Activated CD4-positive, alpha-beta memory T cell treated with anti-CD3 and anti-CD28 coated beads, Interleukin-2, amount 10 ng/mL, durations not matched to agents 7 days and 5 days (primary cell): ENCODE measurements at regions of chr14 and their contacts with region 1.

Region 1: GRCh38 chr14:65847075-65847847 is 434.7 kb downstream of the FUT8 start:
- DNase-seq: peak; percentile 88
- H3K4me3 Mint-ChIP-seq: peak overlapping the region; percentile 55
- H3K27ac Mint-ChIP-seq: peak overlapping the region; percentile 97
- H3K4me1 Mint-ChIP-seq: peaks cover 76% of the 10 kb centered on the region
- H3K27me3 Mint-ChIP-seq: no peaks in the 10 kb centered on the region

Region 2: DNA sequence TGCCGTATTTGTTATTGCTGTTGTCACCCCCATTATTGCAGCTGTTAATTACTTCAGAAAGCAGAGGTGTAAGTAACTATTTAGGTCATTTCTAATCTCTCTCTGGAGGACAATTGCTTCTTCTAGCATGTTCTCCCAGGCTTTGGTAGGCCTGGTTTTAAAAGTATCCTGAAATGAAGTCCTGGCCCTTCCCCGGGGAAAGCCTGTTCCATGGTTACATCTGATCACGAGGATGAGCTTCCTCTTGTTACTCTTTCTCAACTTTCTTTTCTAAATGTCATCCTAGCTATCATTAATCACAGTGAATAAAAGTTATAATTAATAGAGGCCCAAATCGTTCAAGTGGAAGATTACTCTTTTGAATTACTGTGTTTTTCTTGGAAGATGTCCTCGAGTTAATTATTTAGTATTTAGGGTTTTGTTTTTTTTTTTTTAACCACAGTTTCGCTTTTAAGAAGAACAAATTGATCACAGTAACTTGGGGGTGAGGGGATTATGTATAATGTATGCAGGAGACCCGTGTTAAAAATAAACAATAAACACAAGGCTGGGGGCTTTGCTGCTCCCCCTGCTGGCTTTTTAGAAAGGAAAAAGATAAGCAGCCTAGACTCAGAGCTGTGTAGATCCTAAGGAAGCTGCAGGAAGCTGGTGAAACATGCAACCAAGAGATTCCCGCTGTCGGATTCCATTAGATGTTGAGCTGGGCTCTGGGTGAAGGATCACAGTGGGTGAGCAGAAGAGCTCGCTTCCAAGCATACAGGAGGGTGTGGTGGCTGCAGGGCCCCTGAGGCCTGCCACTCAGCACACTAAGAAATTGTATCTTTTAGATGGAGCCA is 14.6 kb before region 1 on chr14:
- CTCF ChIA-PET with region 1: interaction called, 4 read pairs
- POLR2A ChIA-PET with region 1: interaction called, 10 read pairs
- DNase-seq: no peak
- H3K4me3 Mint-ChIP-seq: no peak overlapping the region
- H3K27ac Mint-ChIP-seq: no peak overlapping the region
- H3K4me1 Mint-ChIP-seq: peaks cover 31% of the 10 kb centered on the region
- H3K27me3 Mint-ChIP-seq: peaks cover 2% of the 10 kb centered on the region

Region 3: DNA sequence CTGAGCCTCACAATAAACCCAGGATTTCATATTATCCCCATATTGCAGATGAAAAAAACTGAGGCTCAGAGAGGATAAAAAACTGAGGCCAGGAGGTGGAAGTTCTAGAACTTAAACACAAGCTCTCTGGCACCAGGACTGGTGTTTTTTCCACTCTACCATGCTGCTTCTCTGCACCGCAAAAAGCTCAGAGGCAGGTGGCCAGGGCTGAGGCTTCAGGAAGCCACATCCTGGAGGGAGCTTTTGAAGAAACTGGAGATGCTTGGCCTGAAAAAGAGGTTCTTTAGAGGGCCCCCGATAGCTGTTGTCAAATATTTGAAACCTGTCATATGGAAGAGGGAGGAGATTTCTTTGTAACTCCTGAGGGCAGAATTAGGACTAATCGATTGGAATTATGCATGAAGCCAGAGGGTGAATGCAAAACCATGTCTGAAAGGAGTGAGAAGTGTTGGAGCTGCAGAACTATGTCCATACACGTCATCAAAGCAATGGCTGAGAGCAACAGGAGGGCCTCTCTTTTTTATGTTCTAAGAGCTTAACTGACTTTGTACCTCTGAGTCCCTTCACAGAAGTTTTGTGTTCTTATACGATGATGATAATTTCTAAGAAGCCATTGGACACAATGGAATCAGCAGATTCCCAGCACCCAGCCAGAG is 13.8 kb after region 1 on chr14:
- CTCF ChIA-PET with region 1: interaction called, 10 read pairs
- POLR2A ChIA-PET with region 1: interaction called, 31 read pairs
- DNase-seq: peak; percentile 72
- H3K4me3 Mint-ChIP-seq: peak overlapping the region; percentile 2
- H3K27ac Mint-ChIP-seq: peak overlapping the region; percentile 79
- H3K4me1 Mint-ChIP-seq: peaks cover 64% of the 10 kb centered on the region
- H3K27me3 Mint-ChIP-seq: no peaks in the 10 kb centered on the region

Region 4: GRCh38 chr14:65866886-65867285 is 19.6 kb after region 1 on chr14:
- CTCF ChIA-PET with region 1: interaction called, 10 read pairs
- POLR2A ChIA-PET with region 1: interaction called, 31 read pairs
- DNase-seq: no peak
- H3K4me3 Mint-ChIP-seq: no peak overlapping the region
- H3K27ac Mint-ChIP-seq: no peak overlapping the region
- H3K4me1 Mint-ChIP-seq: peaks cover 53% of the 10 kb centered on the region
- H3K27me3 Mint-ChIP-seq: no peaks in the 10 kb centered on the region

Region 5: GRCh38 chr14:65879248-65880009 is 32.2 kb after region 1 on chr14:
- CTCF ChIA-PET with region 1: interaction called, 22 read pairs
- POLR2A ChIA-PET with region 1: interaction called, 35 read pairs
- DNase-seq: peak; percentile 26
- H3K4me3 Mint-ChIP-seq: no peak overlapping the region
- H3K27ac Mint-ChIP-seq: peak overlapping the region; percentile 88
- H3K4me1 Mint-ChIP-seq: peaks cover 5% of the 10 kb centered on the region
- H3K27me3 Mint-ChIP-seq: no peaks in the 10 kb centered on the region

Region 6: GRCh38 chr14:65949711-65950516 is 102.7 kb after region 1 on chr14:
- CTCF ChIA-PET with region 1: interaction called, 9 read pairs
- POLR2A ChIA-PET with region 1: interaction called, 12 read pairs
- DNase-seq: peak; percentile 31
- H3K4me3 Mint-ChIP-seq: no peak overlapping the region
- H3K27ac Mint-ChIP-seq: peak overlapping the region; percentile 85
- H3K4me1 Mint-ChIP-seq: peaks cover 42% of the 10 kb centered on the region
- H3K27me3 Mint-ChIP-seq: no peaks in the 10 kb centered on the region